Activated CD8-positive, alpha-beta memory T cell treated with anti-CD3 and anti-CD28 coated beads, Interleukin-2, amount 10 ng/mL, durations not matched to agents 7 days and 5 days (primary cell): ENCODE measurements at regions of chr1 and their contacts with region 1.

Region 1: DNA sequence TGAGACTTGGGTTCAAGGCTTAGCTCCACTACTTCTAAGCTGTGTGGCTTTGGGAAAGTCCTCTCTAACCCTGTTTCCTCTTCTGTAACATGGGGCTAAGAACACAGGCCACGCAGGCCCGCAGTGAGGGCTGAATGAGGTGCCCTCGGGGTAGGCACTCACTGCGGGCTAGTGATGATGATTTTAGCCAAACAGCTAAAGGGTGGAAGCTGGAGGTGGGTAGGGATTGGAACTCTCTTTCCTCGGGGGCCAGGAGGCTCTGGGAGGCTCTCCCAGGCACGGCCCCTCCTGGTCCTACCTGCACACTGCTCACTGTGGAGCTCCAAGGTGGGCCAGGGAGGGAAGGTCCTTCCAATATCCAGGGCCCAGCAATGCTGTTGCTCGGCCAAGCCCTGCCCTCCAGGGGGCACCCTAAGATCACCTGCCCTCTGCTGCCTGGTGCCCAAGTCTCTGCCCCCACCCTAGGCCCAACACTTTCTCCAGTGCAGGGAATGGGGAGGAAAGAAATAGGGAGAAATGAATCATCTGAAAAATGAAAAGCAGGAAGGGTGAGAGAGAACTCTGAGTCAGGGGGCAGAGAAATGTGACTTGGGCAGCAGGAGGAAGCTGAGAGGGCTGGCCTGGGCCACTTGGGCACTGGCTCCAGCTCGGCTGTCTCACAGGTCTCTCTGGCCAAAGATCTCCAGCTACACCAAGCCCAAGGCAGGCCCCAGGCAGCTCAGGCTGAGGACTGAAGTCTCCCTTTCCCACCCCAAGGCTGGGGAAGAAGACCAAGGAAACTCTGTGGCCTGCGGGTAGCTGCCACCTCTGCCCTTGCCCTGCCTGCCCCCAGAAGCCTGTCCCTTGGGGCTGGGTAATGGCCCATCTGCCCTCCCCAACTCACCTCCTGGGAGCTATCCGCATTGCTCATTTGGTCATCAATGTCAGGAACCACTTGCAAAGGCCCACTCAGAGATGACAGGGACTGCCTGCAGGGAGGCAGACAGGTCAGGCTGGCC is 19.3 kb upstream of the EVA1B start:
- DNase-seq: peak; percentile 68
- ATAC-seq: peak; percentile 77
- H3K4me3 Mint-ChIP-seq: no peak overlapping the region
- H3K27ac Mint-ChIP-seq: no peak overlapping the region
- H3K4me1 Mint-ChIP-seq: peaks cover 16% of the 10 kb centered on the region
- H3K27me3 Mint-ChIP-seq: no peaks in the 10 kb centered on the region

Region 2: DNA sequence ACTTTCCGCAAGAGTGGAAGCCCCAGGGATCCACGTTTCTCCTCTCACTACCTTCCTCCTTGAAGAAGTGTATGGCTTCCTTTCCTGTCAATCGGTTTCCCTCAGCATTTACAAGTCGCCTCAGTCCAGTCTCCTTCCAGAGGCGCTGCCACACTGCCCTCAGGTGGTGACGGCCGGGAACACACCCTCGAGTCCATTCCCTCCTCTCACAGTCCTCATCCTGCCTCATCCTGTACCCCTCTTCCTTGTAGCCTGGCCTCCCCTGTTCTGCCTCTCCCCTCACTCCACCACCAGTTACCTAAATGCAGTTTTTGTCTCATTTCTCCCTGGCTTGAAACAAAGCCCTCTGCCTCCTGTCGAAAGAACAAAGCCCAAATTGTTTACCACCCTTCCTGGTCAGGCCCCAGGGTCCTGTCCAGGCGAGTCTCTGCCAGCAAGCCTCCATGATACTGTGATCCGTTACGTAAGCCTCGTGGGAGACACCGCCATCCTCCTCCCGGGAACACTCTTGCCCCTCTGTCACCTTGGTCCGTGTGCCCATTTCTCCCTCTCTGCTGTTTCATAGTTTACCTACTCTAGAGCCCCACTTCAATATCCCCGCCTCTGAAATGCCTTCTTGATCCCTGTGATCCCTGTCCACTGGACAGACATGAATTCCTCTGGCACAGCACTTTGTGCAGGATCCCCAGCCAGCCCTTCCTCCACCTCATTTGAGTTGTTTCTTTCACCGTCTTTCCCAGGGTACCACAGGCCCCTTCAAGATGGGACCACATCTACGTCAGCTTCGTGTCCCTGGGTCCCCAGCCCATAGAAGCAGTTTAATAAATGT is 78.3 kb after region 1 on chr1:
- CTCF ChIA-PET with region 1: interaction called, 31 read pairs
- DNase-seq: peak; percentile 95
- ATAC-seq: peak; percentile 98
- H3K4me3 Mint-ChIP-seq: no peak overlapping the region
- H3K27ac Mint-ChIP-seq: peak overlapping the region; percentile 60
- H3K4me1 Mint-ChIP-seq: peaks cover 16% of the 10 kb centered on the region
- H3K27me3 Mint-ChIP-seq: no peaks in the 10 kb centered on the region